ENCODE measurements at regions of chr2 and their contacts with region 1.

Region 1: DNA sequence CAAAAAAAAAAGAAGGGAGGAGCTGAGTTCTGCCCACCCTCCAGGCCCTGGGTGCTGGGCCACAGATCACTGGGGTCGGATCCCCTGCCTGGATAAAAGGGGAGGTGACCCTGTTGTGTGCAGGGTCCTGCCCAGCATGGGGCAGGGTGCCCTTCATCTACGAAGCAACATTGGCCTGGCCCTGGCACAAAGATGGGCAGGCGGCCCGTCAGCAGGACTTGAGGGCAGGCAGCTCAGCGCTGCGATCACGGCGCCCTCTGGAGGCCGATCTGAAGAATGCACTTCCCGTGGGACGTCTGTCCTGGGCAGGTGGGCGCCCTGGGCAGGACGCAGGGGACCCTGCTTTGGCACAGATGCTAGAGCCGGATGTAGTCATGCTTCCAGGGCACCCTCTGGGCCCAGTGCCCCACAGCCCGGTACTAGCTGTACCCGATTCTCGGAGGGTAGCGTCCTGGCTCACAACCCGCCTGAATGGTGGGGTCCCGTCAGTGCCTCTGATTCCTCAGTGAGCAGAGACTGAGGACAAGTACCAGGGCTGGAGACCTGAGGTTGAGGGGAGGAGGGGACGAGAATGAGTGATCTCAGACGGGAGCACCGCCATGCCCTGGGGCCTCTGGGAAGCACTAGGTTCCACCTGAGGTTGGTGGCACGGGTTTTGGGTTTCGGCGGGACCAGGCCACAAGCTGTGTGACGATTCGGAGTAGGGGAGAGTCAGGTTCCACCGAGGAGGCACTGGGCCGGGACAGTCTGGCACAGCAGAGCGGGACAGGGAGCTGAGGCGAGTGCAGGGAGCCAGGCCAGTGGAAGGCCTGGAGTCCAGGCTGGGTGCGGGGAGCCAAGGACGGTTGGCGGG is 18.0 kb downstream of the ARID5A start:
- DNase-seq: peak; percentile 57 to 88 (median 67)
- ATAC-seq: peak; percentile 56
- H3K4me3 ChIP-seq: peak overlapping the region; percentile 7
- H3K4me3 Mint-ChIP-seq: no peak overlapping the region
- H3K27ac ChIP-seq: no peak overlapping the region
- H3K27ac Mint-ChIP-seq: peak overlapping the region; percentile 79
- H3K4me1 ChIP-seq: peaks cover 20% of the 10 kb centered on the region
- H3K4me1 Mint-ChIP-seq: peaks cover 29% of the 10 kb centered on the region
- H3K27me3 ChIP-seq: no peaks in the 10 kb centered on the region
- H3K27me3 Mint-ChIP-seq: no peaks in the 10 kb centered on the region
- CTCF ChIP-seq: peak; percentile 98

Region 2: GRCh38 chr2:96320728-96321622 is 233.5 kb before region 1 on chr2:
- CTCF ChIA-PET with region 1: no interaction called
- POLR2A ChIA-PET with region 1: no interaction called
- intact Hi-C with region 1: no loop called
- DNase-seq: peak in 6 of 14 experiments; percentile 1 to 50 (median 24)
- ATAC-seq: no peak
- H3K4me3 ChIP-seq: peak overlapping the region; percentile 92
- H3K4me3 Mint-ChIP-seq: peak overlapping the region; percentile 84
- H3K27ac ChIP-seq: peak overlapping the region in 1 of 2 donors; percentile 63
- H3K27ac Mint-ChIP-seq: peak overlapping the region; percentile 16
- H3K4me1 ChIP-seq: peaks cover 64% of the 10 kb centered on the region
- H3K4me1 Mint-ChIP-seq: peaks cover 46% of the 10 kb centered on the region
- H3K27me3 ChIP-seq: no peaks in the 10 kb centered on the region
- H3K27me3 Mint-ChIP-seq: peaks cover 3% of the 10 kb centered on the region
- CTCF ChIP-seq: no peak

Region 3: GRCh38 chr2:96359310-96359709 is 195.2 kb before region 1 on chr2:
- CTCF ChIA-PET with region 1: interaction called, 3 read pairs
- POLR2A ChIA-PET with region 1: no interaction called
- intact Hi-C with region 1: loop called (anchors 1 kb)
- DNase-seq: peak; percentile 29 to 67 (median 47)
- ATAC-seq: peak; percentile 64
- H3K4me3 ChIP-seq: no peak overlapping the region
- H3K4me3 Mint-ChIP-seq: no peak overlapping the region
- H3K27ac ChIP-seq: no peak overlapping the region
- H3K27ac Mint-ChIP-seq: peak overlapping the region; percentile 84
- H3K4me1 ChIP-seq: peaks cover 10% of the 10 kb centered on the region
- H3K4me1 Mint-ChIP-seq: peaks cover 15% of the 10 kb centered on the region
- H3K27me3 ChIP-seq: no peaks in the 10 kb centered on the region
- H3K27me3 Mint-ChIP-seq: no peaks in the 10 kb centered on the region
- CTCF ChIP-seq: peak; percentile 65

Region 4: GRCh38 chr2:96407041-96407918 is 147.2 kb before region 1 on chr2:
- CTCF ChIA-PET with region 1: interaction called, 18 read pairs
- POLR2A ChIA-PET with region 1: interaction called, 19 read pairs
- intact Hi-C with region 1: loop called (anchors 1 kb)
- DNase-seq: peak; percentile 58 to 91 (median 76)
- ATAC-seq: peak; percentile 93
- H3K4me3 ChIP-seq: no peak overlapping the region
- H3K4me3 Mint-ChIP-seq: peak overlapping the region; percentile 79
- H3K27ac ChIP-seq: peak overlapping the region; percentile 33 to 35
- H3K27ac Mint-ChIP-seq: peak overlapping the region; percentile 84
- H3K4me1 ChIP-seq: peaks cover 38% of the 10 kb centered on the region
- H3K4me1 Mint-ChIP-seq: peaks cover 41% of the 10 kb centered on the region
- H3K27me3 ChIP-seq: no peaks in the 10 kb centered on the region
- H3K27me3 Mint-ChIP-seq: no peaks in the 10 kb centered on the region
- CTCF ChIP-seq: peak; percentile 74

Region 5: GRCh38 chr2:96470636-96471035 is 83.9 kb before region 1 on chr2:
- CTCF ChIA-PET with region 1: interaction called, 3 read pairs
- POLR2A ChIA-PET with region 1: no interaction called
- intact Hi-C with region 1: loop called in 1 of 2 experiments (anchors 2 kb)
- DNase-seq: peak; percentile 21 to 70 (median 38)
- ATAC-seq: peak; percentile 69
- H3K4me3 ChIP-seq: no peak overlapping the region
- H3K4me3 Mint-ChIP-seq: no peak overlapping the region
- H3K27ac ChIP-seq: no peak overlapping the region
- H3K27ac Mint-ChIP-seq: no peak overlapping the region
- H3K4me1 ChIP-seq: peaks cover 6% of the 10 kb centered on the region
- H3K4me1 Mint-ChIP-seq: no peaks in the 10 kb centered on the region
- H3K27me3 ChIP-seq: peaks cover 0 to 6% of the 10 kb centered on the region in 2 experiments
- H3K27me3 Mint-ChIP-seq: peaks cover 7% of the 10 kb centered on the region
- CTCF ChIP-seq: peak; percentile 63

Region 6: DNA sequence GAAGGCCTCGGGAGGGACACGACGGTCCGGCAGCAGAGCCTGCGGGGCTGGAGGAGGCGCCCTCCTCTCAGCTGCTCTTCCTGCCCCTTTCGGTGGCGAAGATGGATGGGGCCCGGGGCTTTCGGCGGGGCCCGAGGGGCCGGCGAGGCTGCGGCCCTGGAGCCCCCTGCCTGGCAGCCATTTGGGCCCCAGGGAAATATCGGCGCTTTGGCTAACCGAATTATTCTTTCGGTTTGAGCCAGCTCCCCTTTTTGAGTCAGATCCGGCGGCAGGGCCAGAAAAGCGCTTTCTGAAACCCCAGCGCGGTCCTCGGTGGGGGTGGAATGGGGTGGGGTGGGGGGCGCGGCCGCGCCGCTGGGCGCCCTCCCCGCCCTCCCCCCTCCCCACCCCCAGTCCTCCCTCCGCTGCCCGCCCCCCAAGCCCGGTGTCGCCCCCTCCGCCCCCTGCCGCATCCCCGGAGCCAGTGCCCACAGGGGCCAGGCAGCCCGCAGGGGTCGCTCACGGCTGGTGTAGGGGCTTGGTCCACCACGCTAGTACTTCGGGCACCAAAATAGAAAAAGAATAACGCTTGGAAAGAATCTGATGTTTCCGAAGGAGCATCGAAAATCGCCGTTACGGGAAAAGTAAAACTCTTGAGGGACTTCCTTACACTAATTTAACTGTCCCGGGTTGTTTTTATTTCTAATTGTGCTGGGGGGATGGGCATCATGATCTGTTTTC is 27.1 kb before region 1 on chr2:
- CTCF ChIA-PET with region 1: interaction called, 30 read pairs
- POLR2A ChIA-PET with region 1: interaction called, 31 read pairs
- intact Hi-C with region 1: loop called (anchors 1 kb)
- DNase-seq: peak in 11 of 14 experiments; percentile 36 to 74 (median 53)
- ATAC-seq: no peak
- H3K4me3 ChIP-seq: peak overlapping the region; percentile 64
- H3K4me3 Mint-ChIP-seq: peak overlapping the region; percentile 87
- H3K27ac ChIP-seq: peak overlapping the region in 1 of 2 donors; percentile 10
- H3K27ac Mint-ChIP-seq: peak overlapping the region; percentile 79
- H3K4me1 ChIP-seq: peaks cover 81% of the 10 kb centered on the region
- H3K4me1 Mint-ChIP-seq: peaks cover 53% of the 10 kb centered on the region
- H3K27me3 ChIP-seq: no peaks in the 10 kb centered on the region
- H3K27me3 Mint-ChIP-seq: no peaks in the 10 kb centered on the region
- CTCF ChIP-seq: peak; percentile 43

Measured in CD4-positive, alpha-beta T cell (primary cell).